Dendritic cell treated with granulocyte-macrophage colony-stimulating factor and Interleukin-4, amounts not matched to agents 40 ng/mL and 50 ng/mL, for 4 days (primary cell): ENCODE measurements at regions of chr2 and their contacts with region 1.

Region 1: GRCh38 chr2:64523666-64524603 is at the start of gene AFTPH:
- H3K4me3 Mint-ChIP-seq: peak within 1 kb of the TSS; percentile 84
- H3K27ac Mint-ChIP-seq: peak within 1 kb of the TSS; percentile 99
- H3K4me1 Mint-ChIP-seq: peaks cover 22% of the 10 kb centered on the region
- H3K27me3 Mint-ChIP-seq: no peaks in the 10 kb centered on the region

Region 2: DNA sequence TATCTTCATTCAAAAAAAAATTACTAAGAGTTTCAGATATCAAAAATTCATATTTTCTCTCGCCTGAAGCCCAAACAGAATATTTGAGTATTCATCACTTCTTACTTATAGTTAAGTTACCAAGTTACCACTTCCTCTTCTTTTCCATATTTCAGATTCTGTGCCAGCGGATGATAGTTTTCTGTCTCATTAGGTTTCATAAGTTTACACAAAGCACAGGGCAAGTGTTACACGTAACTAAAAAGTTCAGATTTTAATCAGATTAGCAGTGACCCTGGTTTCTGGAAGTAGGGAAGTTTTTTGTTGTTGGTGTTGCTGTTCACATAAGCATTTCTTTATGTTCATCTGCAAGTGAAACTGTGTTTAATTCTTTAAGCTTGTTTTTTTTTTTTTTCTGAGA is 10.4 kb after region 1 on chr2:
- intact Hi-C with region 1: loop called (anchors 1 kb)
- H3K4me3 Mint-ChIP-seq: peak overlapping the region; percentile 61
- H3K27ac Mint-ChIP-seq: peak overlapping the region; percentile 60
- H3K4me1 Mint-ChIP-seq: peaks cover 54% of the 10 kb centered on the region
- H3K27me3 Mint-ChIP-seq: no peaks in the 10 kb centered on the region

Region 3: GRCh38 chr2:64562148-64562784 is 38.3 kb after region 1 on chr2:
- intact Hi-C with region 1: loop called (anchors 2 kb)
- H3K4me3 Mint-ChIP-seq: no peak overlapping the region
- H3K27ac Mint-ChIP-seq: no peak overlapping the region
- H3K4me1 Mint-ChIP-seq: peaks cover 6% of the 10 kb centered on the region
- H3K27me3 Mint-ChIP-seq: no peaks in the 10 kb centered on the region

Region 4: GRCh38 chr2:64644177-64645004 is 120.5 kb after region 1 on chr2:
- intact Hi-C with region 1: loop called (anchors 5 kb)
- H3K4me3 Mint-ChIP-seq: peak overlapping the region; percentile 91
- H3K27ac Mint-ChIP-seq: peak overlapping the region; percentile 98
- H3K4me1 Mint-ChIP-seq: peaks cover 64% of the 10 kb centered on the region
- H3K27me3 Mint-ChIP-seq: no peaks in the 10 kb centered on the region

Region 5: DNA sequence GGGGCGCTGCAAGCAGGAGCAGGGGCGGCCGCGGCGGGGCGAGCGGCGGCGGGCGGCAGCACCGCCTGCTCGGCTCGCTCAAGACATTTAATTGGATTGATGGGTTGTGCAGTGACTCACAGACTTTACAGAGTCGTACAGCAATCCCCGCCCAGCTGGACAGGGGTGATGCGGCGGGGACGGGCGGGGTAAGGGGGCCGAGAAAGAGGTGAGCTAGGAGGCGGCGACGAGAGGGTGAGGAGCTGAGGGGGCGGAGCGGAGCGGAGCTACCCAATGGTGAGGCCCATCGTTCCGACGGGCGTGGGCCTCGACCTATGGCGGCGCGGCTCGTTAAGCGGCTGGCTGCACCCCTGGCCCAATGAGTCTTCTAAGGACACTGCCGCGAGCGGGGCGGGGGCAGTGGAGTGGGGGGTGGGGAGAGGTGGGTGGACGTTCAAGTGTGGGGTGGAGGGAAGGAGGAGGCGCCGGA is 226.9 kb after region 1 on chr2:
- intact Hi-C with region 1: loop called (anchors 5 kb)
- H3K4me3 Mint-ChIP-seq: peak overlapping the region; percentile 97
- H3K27ac Mint-ChIP-seq: peak overlapping the region; percentile 99
- H3K4me1 Mint-ChIP-seq: peaks cover 30% of the 10 kb centered on the region
- H3K27me3 Mint-ChIP-seq: no peaks in the 10 kb centered on the region

Region 6: GRCh38 chr2:64865073-64865830 is 341.3 kb after region 1 on chr2:
- intact Hi-C with region 1: loop called (anchors 2 kb)
- H3K4me3 Mint-ChIP-seq: peak overlapping the region; percentile 68
- H3K27ac Mint-ChIP-seq: no peak overlapping the region
- H3K4me1 Mint-ChIP-seq: no peaks in the 10 kb centered on the region
- H3K27me3 Mint-ChIP-seq: peaks cover 3% of the 10 kb centered on the region

Region 7: GRCh38 chr2:64873472-64873924 is 349.6 kb after region 1 on chr2:
- intact Hi-C with region 1: loop called (anchors 2 kb)
- H3K4me3 Mint-ChIP-seq: peak overlapping the region; percentile 9
- H3K27ac Mint-ChIP-seq: no peak overlapping the region
- H3K4me1 Mint-ChIP-seq: peaks cover 6% of the 10 kb centered on the region
- H3K27me3 Mint-ChIP-seq: no peaks in the 10 kb centered on the region

Region 8: GRCh38 chr2:65129826-65130663 is 606.1 kb after region 1 on chr2 and contains the start of gene RAB1A:
- intact Hi-C with region 1: no loop called
- H3K4me3 Mint-ChIP-seq: peak within 1 kb of the TSS; percentile 95
- H3K27ac Mint-ChIP-seq: peak within 1 kb of the TSS; percentile 99
- H3K4me1 Mint-ChIP-seq: peaks cover 34% of the 10 kb centered on the region
- H3K27me3 Mint-ChIP-seq: no peaks in the 10 kb centered on the region